Body of pancreas (tissue), 4 donors: ENCODE measurements at regions of chr12 and their contacts with region 1.

Region 1: DNA sequence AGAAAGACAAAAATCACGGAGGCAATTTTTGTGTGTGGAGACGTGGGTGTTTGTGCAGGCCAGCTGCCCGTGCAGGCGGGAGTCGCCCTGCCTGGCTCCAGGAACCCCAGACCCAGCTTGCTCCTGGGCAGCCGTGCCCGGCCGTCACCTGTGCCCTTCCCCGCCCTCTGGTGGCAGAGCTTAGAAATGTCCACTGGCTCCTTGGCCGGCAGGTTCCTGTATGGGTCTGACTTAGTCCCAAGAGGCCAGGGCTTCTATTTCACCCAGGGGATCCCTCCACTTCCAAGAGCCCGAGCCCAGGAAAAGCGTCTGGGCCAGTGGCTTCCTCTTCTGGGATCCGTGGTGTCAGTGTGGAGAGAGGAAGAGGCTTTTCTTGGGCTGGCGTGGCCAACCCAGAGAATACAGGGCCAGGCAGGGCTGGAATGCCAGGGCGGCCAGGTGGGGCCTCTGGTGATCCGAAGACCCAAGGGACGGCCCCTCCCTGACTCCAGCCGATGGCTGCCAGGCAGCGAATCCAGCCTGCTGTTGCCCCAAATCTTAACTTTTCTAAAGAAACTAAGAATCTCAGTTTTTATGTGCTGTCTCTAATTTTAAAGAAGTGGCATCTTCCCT is 120.9 kb downstream of the TMEM132C start:
- DNase-seq: peak; percentile 61 to 76 (median 66)
- ATAC-seq: peak; percentile 81
- H3K4me3 ChIP-seq: no peak overlapping the region
- H3K27ac ChIP-seq: no peak overlapping the region
- H3K4me1 ChIP-seq: no peaks in the 10 kb centered on the region
- H3K27me3 ChIP-seq: peaks cover 0 to 6% of the 10 kb centered on the region in 2 donors
- CTCF ChIP-seq: peak; percentile 60 to 74 (median 63)
- POLR2A ChIP-seq: no peak

Region 2: DNA sequence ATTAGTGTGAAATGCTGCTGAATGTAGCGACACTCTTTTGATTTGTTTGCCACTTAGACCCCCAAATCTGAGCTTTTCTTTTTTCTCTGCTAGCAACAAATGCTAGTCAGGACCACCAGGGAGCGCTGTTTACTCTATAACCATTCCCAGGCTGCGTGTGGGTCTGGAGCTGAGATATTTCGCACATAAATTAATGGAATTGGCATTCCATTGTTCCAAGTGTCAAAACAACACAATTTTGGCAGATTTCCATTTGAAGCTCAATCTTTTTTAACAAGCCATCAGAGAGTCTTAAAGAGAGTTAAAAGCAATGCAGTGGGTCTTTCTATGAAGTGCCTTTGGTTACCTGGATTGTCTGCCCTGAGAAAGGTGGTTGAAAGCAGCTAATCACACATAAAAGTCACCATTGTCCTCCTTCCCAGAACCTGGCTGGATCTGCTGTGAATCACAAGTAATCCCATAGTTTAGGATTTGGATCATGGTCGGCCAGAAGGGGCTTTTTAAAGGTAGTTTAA is 128.3 kb before region 1 on chr12:
- intact Hi-C with region 1: loop called (anchors 10 kb)
- DNase-seq: peak; percentile 42 to 62 (median 48)
- ATAC-seq: peak; percentile 52
- H3K4me3 ChIP-seq: no peak overlapping the region
- H3K27ac ChIP-seq: no peak overlapping the region
- H3K4me1 ChIP-seq: no peaks in the 10 kb centered on the region
- H3K27me3 ChIP-seq: no peaks in the 10 kb centered on the region
- CTCF ChIP-seq: peak; percentile 34 to 80 (median 71)
- POLR2A ChIP-seq: no peak